Aorta (tissue), 5 donors: ENCODE measurements at regions of chr11 and their contacts with region 1.

Region 1: GRCh38 chr11:108121274-108122155 is at the start of gene ACAT1:
- DNase-seq: peak; percentile 98 to 100
- ATAC-seq: peak; percentile 98
- H3K4me3 ChIP-seq: peak within 1 kb of the TSS; percentile 73 to 78
- H3K27ac ChIP-seq: peak within 1 kb of the TSS; percentile 77 to 88
- H3K4me1 ChIP-seq: no peaks in the 10 kb centered on the region
- H3K27me3 ChIP-seq: no peaks in the 10 kb centered on the region
- total RNA-seq, gene ACAT1: 65.8 to 70.5 TPM

Region 2: DNA sequence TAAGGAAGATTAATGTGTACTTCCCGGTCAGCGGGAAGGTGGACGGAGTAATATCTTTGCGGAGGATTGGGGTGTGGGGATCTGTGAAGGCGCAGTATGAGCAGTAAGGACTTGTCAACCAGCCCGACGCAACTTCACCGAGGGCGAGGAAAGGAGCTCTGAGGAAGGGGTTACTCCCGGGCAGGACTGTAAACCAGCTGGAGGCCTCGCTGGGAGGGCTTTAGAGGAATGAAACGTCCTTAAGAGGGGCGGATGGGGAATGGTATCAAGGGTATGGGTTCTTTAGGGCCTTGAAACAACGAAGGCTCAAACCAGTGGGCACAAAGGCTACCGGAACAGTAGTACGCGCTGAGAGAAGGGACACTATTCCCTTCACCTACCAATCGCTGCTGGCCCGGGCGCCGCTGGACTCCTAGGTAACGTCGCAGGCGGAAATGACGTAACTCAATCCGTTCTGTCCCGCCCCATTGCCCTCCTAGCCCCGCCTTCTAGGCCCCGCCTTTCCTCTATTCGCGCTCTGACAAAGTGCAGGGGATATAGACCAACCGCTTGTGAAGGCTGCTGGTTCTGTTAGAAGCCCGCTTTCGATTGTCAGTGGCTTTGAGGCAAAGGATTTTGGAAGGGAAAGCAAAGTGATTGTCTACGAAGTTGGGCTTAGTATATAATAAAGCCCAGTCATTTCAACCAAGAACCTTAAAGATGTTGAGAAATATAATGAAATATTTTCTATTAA is 345.7 kb after region 1 on chr11 and contains the start of gene C11orf65:
- intact Hi-C with region 1: no loop called
- DNase-seq: peak; percentile 96 to 98
- ATAC-seq: peak; percentile 100
- H3K4me3 ChIP-seq: peak within 1 kb of the TSS; percentile 22 to 41
- H3K27ac ChIP-seq: peak within 1 kb of the TSS; percentile 91 to 94
- H3K4me1 ChIP-seq: peaks cover 0 to 2% of the 10 kb centered on the region in 2 donors
- H3K27me3 ChIP-seq: no peaks in the 10 kb centered on the region
- total RNA-seq, gene C11orf65: 0.36 TPM in 1 of 2 donors, not detected in the other

Region 3: GRCh38 chr11:108664730-108665525 is 543.4 kb after region 1 on chr11 and contains the start of gene DDX10:
- intact Hi-C with region 1: loop called in 1 of 2 experiments (anchors 5 kb)
- DNase-seq: peak; percentile 98 to 99
- ATAC-seq: peak; percentile 99
- H3K4me3 ChIP-seq: peak within 1 kb of the TSS; percentile 66 to 86
- H3K27ac ChIP-seq: no peak within 1 kb of the TSS
- H3K4me1 ChIP-seq: peaks cover 0 to 10% of the 10 kb centered on the region in 2 donors
- H3K27me3 ChIP-seq: no peaks in the 10 kb centered on the region
- total RNA-seq, gene DDX10: 18.8 to 24.2 TPM